CD4-positive, alpha-beta memory T cell (primary cell): ENCODE measurements at regions of chr1 and their contacts with region 1.

Region 1: GRCh38 chr1:25031966-25032667 is 102.0 kb upstream of the RUNX3 start:
- DNase-seq: peak; percentile 81 to 91 (median 85)
- H3K4me3 ChIP-seq: no peak overlapping the region
- H3K4me3 Mint-ChIP-seq: peak overlapping the region; percentile 37 to 78 (median 62)
- H3K27ac ChIP-seq: peak overlapping the region; percentile 79
- H3K27ac Mint-ChIP-seq: peak overlapping the region in 6 of 7 donors; percentile 88 to 97 (median 95)
- H3K4me1 ChIP-seq: peaks cover 100% of the 10 kb centered on the region
- H3K4me1 Mint-ChIP-seq: peaks cover 4 to 62% (median 31%) of the 10 kb centered on the region in 4 donors
- H3K27me3 ChIP-seq: no peaks in the 10 kb centered on the region
- H3K27me3 Mint-ChIP-seq: no peaks in the 10 kb centered on the region

Region 2: DNA sequence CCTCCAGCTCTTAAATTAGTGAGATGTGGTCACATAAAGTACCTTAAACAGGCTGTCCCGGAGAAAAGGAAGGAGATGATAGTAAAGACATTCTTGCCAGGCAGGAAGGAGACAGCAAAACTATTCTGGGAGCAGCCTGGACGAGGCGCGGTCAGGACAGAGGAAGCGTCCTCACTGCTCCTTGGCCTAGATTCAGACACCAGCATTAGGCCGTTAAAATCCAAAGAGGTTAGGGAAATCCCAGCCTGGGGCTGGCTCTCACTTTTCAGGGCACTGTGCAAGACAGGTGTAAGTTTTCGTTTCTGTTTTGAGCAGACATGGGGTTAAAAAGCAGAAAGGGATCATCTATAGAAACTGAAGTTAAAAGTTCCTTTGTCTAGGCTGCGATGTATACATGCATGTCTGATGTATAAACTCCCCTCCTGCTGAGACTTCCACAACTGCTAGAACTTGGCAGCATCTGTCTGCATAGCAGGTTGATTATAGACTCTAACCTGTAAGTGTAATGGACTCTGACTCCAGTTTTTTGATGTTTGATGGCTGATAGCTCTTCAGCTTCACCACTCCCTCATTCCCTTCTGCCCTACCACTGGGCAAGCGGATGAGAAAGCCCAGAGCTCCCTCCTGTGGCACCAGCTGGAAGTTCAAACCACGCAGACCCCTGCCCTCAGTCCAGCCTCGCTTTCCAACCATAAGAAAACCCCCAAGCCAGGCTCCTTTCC is 640.1 kb before region 1 on chr1:
- CTCF ChIA-PET with region 1: no interaction called
- POLR2A ChIA-PET with region 1: no interaction called
- intact Hi-C with region 1: no loop called
- DNase-seq: peak; percentile 62 to 75 (median 69)
- H3K4me3 ChIP-seq: peak overlapping the region in 1 of 2 donors; percentile 17
- H3K4me3 Mint-ChIP-seq: peak overlapping the region; percentile 81 to 92 (median 86)
- H3K27ac ChIP-seq: peak overlapping the region; percentile 72
- H3K27ac Mint-ChIP-seq: peak overlapping the region; percentile 94 to 99 (median 98)
- H3K4me1 ChIP-seq: peaks cover 33% of the 10 kb centered on the region
- H3K4me1 Mint-ChIP-seq: peaks cover 23 to 29% (median 26%) of the 10 kb centered on the region in 4 donors
- H3K27me3 ChIP-seq: no peaks in the 10 kb centered on the region
- H3K27me3 Mint-ChIP-seq: no peaks in the 10 kb centered on the region

Region 3: GRCh38 chr1:24964811-24965570 is 67.1 kb before region 1 on chr1:
- CTCF ChIA-PET with region 1: interaction called, 155 read pairs
- POLR2A ChIA-PET with region 1: interaction called, 36 read pairs
- intact Hi-C with region 1: loop called (anchors 1 kb)
- DNase-seq: peak; percentile 90 to 95 (median 93)
- H3K4me3 ChIP-seq: peak overlapping the region; percentile 46 to 69
- H3K4me3 Mint-ChIP-seq: peak overlapping the region; percentile 69 to 91 (median 84)
- H3K27ac ChIP-seq: peak overlapping the region; percentile 69
- H3K27ac Mint-ChIP-seq: peak overlapping the region; percentile 89 to 100 (median 96)
- H3K4me1 ChIP-seq: peaks cover 45% of the 10 kb centered on the region
- H3K4me1 Mint-ChIP-seq: peaks cover 16 to 73% (median 39%) of the 10 kb centered on the region in 4 donors
- H3K27me3 ChIP-seq: no peaks in the 10 kb centered on the region
- H3K27me3 Mint-ChIP-seq: peaks cover 0 to 2% of the 10 kb centered on the region in 2 donors

Region 4: DNA sequence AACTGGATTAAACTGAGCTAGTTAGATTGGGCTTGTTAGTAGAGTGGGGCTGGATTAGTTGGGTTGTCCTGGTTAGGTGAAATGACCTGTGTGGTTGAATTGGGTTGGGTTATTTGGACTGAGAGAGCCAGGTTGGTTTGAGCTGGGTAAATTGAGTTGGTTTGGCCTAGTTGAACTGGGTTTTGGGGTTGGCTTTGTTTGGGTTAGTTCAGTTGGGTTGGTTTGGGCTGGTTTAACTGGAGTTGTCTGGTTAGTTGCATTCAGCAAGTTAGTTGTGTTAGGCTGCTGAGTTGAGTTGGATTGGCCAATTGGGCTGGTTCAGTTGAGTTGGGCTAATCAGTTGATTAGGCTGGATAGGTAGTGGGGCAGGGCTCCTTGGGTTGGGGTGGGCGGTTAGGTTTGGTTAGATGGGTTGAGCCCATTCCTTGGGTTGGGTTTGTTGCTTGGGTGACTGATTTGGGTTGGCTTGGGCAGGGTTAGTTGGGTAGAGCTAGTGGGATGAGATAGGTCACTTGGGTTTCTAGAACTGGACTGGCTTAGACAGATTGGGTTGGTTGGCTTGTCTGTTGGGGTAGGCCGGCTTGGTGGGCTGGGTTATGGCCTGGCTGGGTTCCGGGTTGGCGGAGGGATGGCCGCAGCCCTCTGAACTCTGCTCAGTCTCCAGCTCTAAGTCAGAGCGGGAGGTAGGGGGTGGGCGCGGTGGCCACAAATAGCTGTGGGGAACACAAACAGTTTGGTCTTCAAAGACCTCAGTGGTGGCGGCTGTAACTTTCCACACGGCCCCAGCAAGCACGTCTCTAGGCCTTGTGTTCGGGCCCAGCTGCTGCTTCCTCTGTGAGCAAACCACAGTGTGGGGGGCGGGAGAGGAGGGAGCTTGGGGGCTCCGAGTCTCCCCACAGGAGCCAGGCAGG is 34.9 kb before region 1 on chr1:
- CTCF ChIA-PET with region 1: interaction called, 28 read pairs
- POLR2A ChIA-PET with region 1: interaction called, 18 read pairs
- intact Hi-C with region 1: loop called (anchors 1 kb)
- DNase-seq: no peak
- H3K4me3 ChIP-seq: no peak overlapping the region
- H3K4me3 Mint-ChIP-seq: peak overlapping the region in 4 of 8 donors; percentile 24 to 53 (median 40)
- H3K27ac ChIP-seq: no peak overlapping the region
- H3K27ac Mint-ChIP-seq: peak overlapping the region in 5 of 7 donors; percentile 36 to 90 (median 77)
- H3K4me1 ChIP-seq: peaks cover 57% of the 10 kb centered on the region
- H3K4me1 Mint-ChIP-seq: peaks cover 31 to 86% (median 52%) of the 10 kb centered on the region in 4 donors
- H3K27me3 ChIP-seq: no peaks in the 10 kb centered on the region
- H3K27me3 Mint-ChIP-seq: no peaks in the 10 kb centered on the region

Region 5: DNA sequence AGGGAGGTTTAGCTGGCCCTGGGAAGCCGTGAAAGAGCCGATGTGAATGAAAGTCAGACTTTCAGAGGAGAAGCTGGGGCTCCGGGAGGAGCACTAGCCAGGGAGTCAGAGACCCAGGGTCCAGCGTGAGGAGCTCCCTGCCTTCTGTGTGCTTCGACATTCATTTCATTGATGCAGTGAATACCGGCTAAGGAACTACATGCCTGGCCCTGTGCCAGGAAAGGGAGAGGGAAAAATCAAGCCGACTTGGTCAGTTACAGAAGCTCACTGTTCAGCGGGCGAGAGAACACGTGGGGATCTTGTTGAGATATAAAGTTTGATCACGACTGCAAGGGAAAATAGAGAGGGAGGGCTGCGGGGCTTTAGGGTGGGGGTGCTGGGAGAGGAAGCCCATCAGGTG is 25.3 kb before region 1 on chr1:
- CTCF ChIA-PET with region 1: interaction called, 23 read pairs
- POLR2A ChIA-PET with region 1: interaction called, 6 read pairs
- intact Hi-C with region 1: loop called (anchors 1 kb)
- DNase-seq: no peak
- H3K4me3 ChIP-seq: no peak overlapping the region
- H3K4me3 Mint-ChIP-seq: peak overlapping the region in 1 of 8 donors; percentile 22
- H3K27ac ChIP-seq: no peak overlapping the region
- H3K27ac Mint-ChIP-seq: peak overlapping the region in 3 of 7 donors; percentile 3 to 84 (median 79)
- H3K4me1 ChIP-seq: peaks cover 20% of the 10 kb centered on the region
- H3K4me1 Mint-ChIP-seq: peaks cover 16 to 38% (median 28%) of the 10 kb centered on the region in 4 donors
- H3K27me3 ChIP-seq: no peaks in the 10 kb centered on the region
- H3K27me3 Mint-ChIP-seq: no peaks in the 10 kb centered on the region

Region 6: GRCh38 chr1:25055324-25055780 is 23.2 kb after region 1 on chr1:
- CTCF ChIA-PET with region 1: no interaction called
- POLR2A ChIA-PET with region 1: no interaction called
- intact Hi-C with region 1: no loop called
- DNase-seq: no peak
- H3K4me3 ChIP-seq: no peak overlapping the region
- H3K4me3 Mint-ChIP-seq: no peak overlapping the region
- H3K27ac ChIP-seq: no peak overlapping the region
- H3K27ac Mint-ChIP-seq: no peak overlapping the region
- H3K4me1 ChIP-seq: no peaks in the 10 kb centered on the region
- H3K4me1 Mint-ChIP-seq: peaks cover 0 to 3% (median 0%) of the 10 kb centered on the region in 4 donors
- H3K27me3 ChIP-seq: no peaks in the 10 kb centered on the region
- H3K27me3 Mint-ChIP-seq: peaks cover 15 to 16% of the 10 kb centered on the region in 2 donors